ENCODE measurements at regions of chr11 and their contacts with region 1.

Region 1: GRCh38 chr11:288328-289144 is at the start of gene PGGHG:
- DNase-seq: peak in 9 of 10 donors; percentile 2 to 75 (median 58)
- ATAC-seq: peak; percentile 17 to 28
- H3K4me3 Mint-ChIP-seq: peak within 1 kb of the TSS; percentile 93 to 100 (median 97)
- H3K27ac Mint-ChIP-seq: peak within 1 kb of the TSS; percentile 93 to 99 (median 98)
- H3K4me1 Mint-ChIP-seq: peaks cover 27 to 56% (median 41%) of the 10 kb centered on the region in 4 donors
- H3K27me3 Mint-ChIP-seq: no peaks in the 10 kb centered on the region
- polyA plus RNA-seq, gene PGGHG: 8.1 to 14.9 (median 11.2) TPM

Region 2: GRCh38 chr11:225734-226453 is 62.6 kb before region 1 on chr11:
- POLR2A ChIA-PET with region 1: no interaction called
- DNase-seq: no peak
- ATAC-seq: no peak
- H3K4me3 Mint-ChIP-seq: no peak overlapping the region
- H3K27ac Mint-ChIP-seq: peak overlapping the region in 1 of 10 donors; percentile 22
- H3K4me1 Mint-ChIP-seq: peaks cover 4 to 17% (median 11%) of the 10 kb centered on the region in 4 donors
- H3K27me3 Mint-ChIP-seq: no peaks in the 10 kb centered on the region

Region 3: DNA sequence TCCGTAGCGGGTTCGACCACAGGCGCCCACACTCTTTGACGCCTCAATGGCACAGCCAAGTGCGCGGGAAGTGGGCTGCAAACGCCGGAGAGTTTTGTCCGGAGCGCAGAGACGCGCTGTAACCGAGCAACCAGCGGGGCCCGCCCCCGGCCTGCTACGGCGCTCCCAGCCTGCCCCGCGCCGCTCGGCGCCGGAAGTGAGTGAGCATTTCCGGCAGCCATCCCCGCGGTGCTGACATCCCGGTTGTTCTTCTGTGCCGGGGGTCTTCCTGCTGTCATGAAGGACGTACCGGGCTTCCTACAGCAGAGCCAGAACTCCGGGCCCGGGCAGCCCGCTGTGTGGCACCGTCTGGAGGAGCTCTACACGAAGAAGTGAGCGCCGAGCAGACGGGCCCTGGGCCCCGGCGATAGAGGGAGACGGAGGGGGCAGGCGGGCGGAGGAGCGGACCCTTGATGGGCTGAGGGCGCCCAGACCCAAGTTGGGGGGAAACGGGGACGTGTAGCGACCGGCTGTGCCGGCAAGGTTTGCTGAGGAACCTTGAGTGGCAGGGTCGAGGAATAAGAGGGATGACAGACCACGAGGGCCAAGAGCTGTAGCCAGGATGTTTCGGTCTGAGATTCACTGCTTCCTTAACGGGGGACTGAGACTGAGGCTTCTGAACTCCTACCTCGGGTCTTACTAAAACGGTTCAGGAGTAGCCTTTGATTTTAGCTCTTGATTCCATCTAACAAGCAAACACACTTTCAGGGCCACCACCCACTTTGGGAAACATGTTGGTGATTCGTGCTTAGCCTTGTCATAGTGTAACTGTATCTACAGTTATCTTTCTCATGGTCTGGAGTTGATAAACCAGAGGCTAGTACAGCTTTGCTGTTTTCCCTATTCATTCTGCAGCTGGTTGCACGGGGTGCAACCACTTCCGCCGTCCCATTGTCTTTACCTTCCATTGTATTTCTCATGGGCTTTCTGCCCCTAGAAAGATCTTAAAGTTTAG is 51.5 kb before region 1 on chr11 and contains the start of gene PSMD13:
- POLR2A ChIA-PET with region 1: interaction called, 16 read pairs
- DNase-seq: peak; percentile 82 to 91 (median 86)
- ATAC-seq: peak; percentile 80 to 83
- H3K4me3 Mint-ChIP-seq: peak within 1 kb of the TSS; percentile 93 to 99 (median 98)
- H3K27ac Mint-ChIP-seq: peak within 1 kb of the TSS; percentile 89 to 100 (median 100)
- H3K4me1 Mint-ChIP-seq: peaks cover 20 to 61% (median 46%) of the 10 kb centered on the region in 4 donors
- H3K27me3 Mint-ChIP-seq: no peaks in the 10 kb centered on the region
- polyA plus RNA-seq, gene PSMD13: 196 to 223 (median 208) TPM

Region 4: DNA sequence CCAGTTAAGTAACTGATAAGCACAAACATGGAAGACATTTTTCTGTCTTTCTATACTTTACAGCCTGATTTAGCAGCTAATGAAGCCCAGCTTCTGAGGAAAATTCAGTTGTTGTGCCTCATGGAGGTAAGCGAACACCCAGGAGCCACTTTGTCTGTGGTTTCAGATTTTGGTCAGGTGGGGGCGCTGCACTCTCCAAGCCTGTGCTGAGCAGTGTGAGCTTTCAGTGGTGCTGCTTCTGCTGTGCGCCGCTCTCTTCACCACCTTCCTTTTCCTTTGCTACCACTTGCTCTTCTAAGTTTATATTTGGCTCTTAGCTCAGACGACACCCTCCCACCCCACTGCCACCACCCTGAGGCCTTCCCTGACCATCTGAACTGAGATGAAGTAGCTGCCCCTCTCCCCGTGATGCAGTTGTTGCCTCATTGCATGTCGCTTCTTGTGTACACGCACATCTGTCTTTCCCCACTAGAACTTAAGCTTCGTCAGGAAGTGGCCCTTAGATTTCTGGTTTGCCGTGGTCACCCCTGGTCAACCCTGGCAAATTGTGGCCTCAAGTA is 37.7 kb before region 1 on chr11:
- POLR2A ChIA-PET with region 1: interaction called, 229 read pairs
- DNase-seq: peak; percentile 74 to 91 (median 84)
- ATAC-seq: peak; percentile 99 to 100
- H3K4me3 Mint-ChIP-seq: peak overlapping the region in 2 of 10 donors; percentile 23 to 37
- H3K27ac Mint-ChIP-seq: peak overlapping the region in 9 of 10 donors; percentile 67 to 96 (median 88)
- H3K4me1 Mint-ChIP-seq: peaks cover 9 to 20% (median 10%) of the 10 kb centered on the region in 4 donors
- H3K27me3 Mint-ChIP-seq: no peaks in the 10 kb centered on the region

Region 5: DNA sequence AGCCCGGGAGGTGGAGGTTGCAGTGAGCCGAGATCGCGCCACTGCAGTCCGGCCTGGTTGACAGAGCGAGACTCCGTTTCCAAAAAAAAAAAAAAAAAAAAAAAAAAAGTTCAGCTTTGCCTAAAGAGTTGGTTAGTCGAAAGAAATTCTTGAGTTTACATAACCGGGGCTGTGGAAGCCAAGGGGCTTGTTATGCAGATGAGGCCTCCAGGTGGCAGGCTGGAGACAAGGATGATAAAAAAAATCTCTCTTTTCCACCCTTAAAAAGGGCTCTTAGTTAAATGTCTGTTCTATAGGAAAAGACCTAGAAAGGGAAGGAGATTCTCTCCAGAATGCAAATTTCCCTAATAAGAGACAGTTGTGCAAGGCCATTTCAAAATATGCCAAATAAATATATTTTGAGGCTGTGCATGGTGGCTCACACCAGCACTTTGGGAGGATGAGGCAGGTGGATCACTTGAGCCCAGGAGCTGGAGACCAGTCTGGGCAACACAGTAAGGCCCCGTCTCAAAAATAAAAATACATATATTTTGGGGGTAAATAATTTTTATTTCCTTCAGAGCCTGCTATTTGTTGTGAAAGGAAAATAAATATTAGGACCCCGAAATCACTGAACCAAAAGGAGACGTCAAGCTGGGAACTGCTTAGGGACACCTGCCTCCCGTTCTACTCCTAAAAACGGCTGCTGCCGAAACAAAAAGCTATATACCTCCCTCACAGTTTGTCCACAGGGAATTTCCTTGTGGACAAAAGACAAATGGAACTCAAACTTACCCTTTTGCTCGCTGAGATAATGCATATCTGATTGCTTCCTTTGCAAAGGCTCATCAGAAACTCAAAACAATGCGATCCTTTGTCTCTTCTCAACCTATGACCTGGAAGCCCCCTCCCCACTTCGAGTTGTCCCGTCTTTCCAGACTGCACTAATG is 16.6 kb after region 1 on chr11:
- POLR2A ChIA-PET with region 1: interaction called, 122 read pairs
- DNase-seq: peak in 8 of 10 donors; percentile 59 to 86 (median 71)
- ATAC-seq: peak; percentile 11 to 30
- H3K4me3 Mint-ChIP-seq: peak overlapping the region in 7 of 10 donors; percentile 30 to 72 (median 36)
- H3K27ac Mint-ChIP-seq: peak overlapping the region; percentile 48 to 97 (median 88)
- H3K4me1 Mint-ChIP-seq: peaks cover 32 to 74% (median 63%) of the 10 kb centered on the region in 4 donors
- H3K27me3 Mint-ChIP-seq: peaks cover 0 to 2% (median 0%) of the 10 kb centered on the region in 5 donors

Region 6: GRCh38 chr11:313787-314547 is 25.4 kb after region 1 on chr11 and contains the start of gene IFITM1:
- POLR2A ChIA-PET with region 1: interaction called, 70 read pairs
- DNase-seq: peak in 9 of 10 donors; percentile 55 to 90 (median 82)
- ATAC-seq: peak; percentile 56 to 78
- H3K4me3 Mint-ChIP-seq: peak within 1 kb of the TSS; percentile 88 to 100 (median 97)
- H3K27ac Mint-ChIP-seq: peak within 1 kb of the TSS; percentile 94 to 99 (median 99)
- H3K4me1 Mint-ChIP-seq: peaks cover 30 to 50% (median 40%) of the 10 kb centered on the region in 4 donors
- H3K27me3 Mint-ChIP-seq: no peaks in the 10 kb centered on the region
- polyA plus RNA-seq, gene IFITM1: 1,833 to 2,198 (median 2,135) TPM

Region 7: DNA sequence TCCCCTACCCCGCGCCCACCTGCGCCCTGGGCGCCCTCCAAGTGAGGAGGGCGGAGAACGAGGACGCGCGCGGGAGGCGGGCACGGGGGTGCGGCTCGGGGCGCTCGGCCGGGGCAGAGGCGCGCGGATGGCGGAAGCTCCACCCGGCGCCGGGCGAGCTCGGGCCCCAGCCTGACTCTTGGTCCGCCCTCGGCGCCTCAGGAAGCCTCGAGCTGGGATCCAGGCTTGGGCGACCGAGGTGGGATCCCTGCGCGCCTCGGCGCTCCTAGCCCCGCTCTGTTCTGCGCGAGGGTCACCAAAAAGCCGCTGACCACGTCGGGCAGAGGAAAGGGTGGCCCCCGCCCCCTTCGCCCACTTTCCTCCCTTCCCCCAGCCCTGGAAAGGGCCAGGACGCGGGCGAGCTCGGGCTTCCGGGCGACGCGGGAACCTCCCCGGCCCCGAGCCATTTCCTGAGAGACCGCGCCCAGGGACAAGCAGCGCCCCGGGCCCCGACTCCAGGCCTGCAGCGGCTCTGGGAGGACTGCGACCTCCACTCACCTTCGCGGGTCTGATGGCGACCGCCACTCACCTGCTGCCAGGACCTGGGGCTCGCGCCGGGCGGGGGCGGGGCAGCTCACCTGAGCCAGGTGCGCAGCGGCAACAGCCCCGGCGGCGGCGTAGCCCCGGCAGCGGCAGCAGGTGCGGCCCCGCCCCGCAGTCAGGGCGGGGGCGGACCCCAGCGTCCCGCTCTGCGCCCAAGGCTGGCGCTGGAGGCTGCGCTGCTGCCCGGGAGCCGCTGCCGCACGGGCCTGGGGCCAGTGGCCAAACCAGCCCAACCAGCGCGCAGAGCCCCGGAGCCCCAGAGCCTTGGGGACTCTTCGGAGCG is 128.5 kb after region 1 on chr11:
- POLR2A ChIA-PET with region 1: interaction called, 15 read pairs
- DNase-seq: peak in 6 of 10 donors; percentile 13 to 52 (median 45)
- ATAC-seq: peak; percentile 20 to 33
- H3K4me3 Mint-ChIP-seq: peak overlapping the region in 9 of 10 donors; percentile 92 to 100 (median 98)
- H3K27ac Mint-ChIP-seq: peak overlapping the region in 3 of 10 donors; percentile 31 to 95 (median 92)
- H3K4me1 Mint-ChIP-seq: peaks cover 9 to 44% (median 32%) of the 10 kb centered on the region in 4 donors
- H3K27me3 Mint-ChIP-seq: no peaks in the 10 kb centered on the region

Region 8: DNA sequence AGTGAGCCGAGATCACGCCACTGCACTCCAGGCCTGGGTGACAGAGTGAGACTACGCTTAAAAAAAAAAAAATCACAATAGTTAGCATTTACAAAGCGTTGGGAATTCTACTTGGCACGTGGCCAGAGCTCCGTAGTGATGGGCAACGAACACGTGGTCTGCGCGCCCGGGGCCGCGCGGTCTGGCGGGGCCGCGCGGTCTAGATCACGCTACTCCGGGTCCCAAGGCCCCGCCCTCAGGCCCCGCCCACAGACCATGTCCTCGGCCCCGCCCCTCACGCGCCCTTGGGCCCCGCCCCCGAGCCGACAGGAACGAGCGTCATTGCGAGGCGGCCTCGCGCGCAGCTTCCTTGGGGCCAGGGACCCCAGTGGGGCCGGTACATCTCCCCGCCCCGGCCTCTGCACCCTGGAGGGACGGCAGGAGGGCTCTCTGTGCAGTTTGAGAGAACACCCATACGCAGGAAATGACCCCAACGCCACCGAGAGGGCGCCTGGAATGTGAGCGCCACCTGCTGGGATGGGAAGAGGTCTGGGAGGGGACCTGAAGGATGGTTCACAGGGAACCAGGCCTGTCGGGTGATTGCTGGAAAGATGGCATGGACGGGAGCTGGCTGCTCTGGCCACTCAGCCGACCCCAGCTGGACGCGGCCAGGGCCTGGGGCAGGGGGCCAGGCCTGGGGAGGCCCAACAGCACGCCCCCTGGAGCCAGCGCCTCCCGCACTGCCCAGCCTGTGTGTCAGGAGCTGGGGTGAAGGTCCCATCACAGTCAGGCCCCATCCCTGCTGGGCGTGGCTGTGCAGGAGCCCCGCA is 159.6 kb after region 1 on chr11:
- POLR2A ChIA-PET with region 1: interaction called, 10 read pairs
- DNase-seq: peak; percentile 90 to 99 (median 94)
- ATAC-seq: peak; percentile 61 to 62
- H3K4me3 Mint-ChIP-seq: peak overlapping the region; percentile 84 to 93 (median 88)
- H3K27ac Mint-ChIP-seq: peak overlapping the region; percentile 87 to 99 (median 97)
- H3K4me1 Mint-ChIP-seq: peaks cover 11 to 35% (median 28%) of the 10 kb centered on the region in 4 donors
- H3K27me3 Mint-ChIP-seq: no peaks in the 10 kb centered on the region

Measured in naive thymus-derived CD8-positive, alpha-beta T cell (primary cell).